ENCODE measurements at regions of chr17 and their contacts with region 1.

Region 1: GRCh38 chr17:78888941-78889518 is 14.0 kb downstream of the CEP295NL start:
- DNase-seq: no peak
- H3K27ac ChIP-seq: peak overlapping the region; percentile 45
- CTCF ChIP-seq: no peak

Region 2: GRCh38 chr17:78925662-78926555 is 36.9 kb after region 1 on chr17:
- CTCF ChIA-PET with region 1: no interaction called
- POLR2A ChIA-PET with region 1: interaction called, 13 read pairs
- DNase-seq: no peak
- H3K27ac ChIP-seq: peak overlapping the region; percentile 96
- CTCF ChIP-seq: no peak

Measured in RWPE1 (cell line).